IMR-90 (cell line): ENCODE measurements at regions of chr16 and their contacts with region 1.

Region 1: GRCh38 chr16:28943281-28943680 is 7.5 kb upstream of the NFATC2IP start:
- DNase-seq: no peak
- ATAC-seq: no peak
- H3K4me3 ChIP-seq: no peak overlapping the region
- H3K27ac ChIP-seq: no peak overlapping the region
- H3K4me1 ChIP-seq: peaks cover 4% of the 10 kb centered on the region
- H3K27me3 ChIP-seq: no peaks in the 10 kb centered on the region
- CTCF ChIP-seq: no peak
- POLR2A ChIP-seq: no peak
- RAD21 ChIP-seq: no peak

Region 2: GRCh38 chr16:28823872-28824716 is 119.2 kb before region 1 on chr16:
- CTCF ChIA-PET with region 1: interaction called, 3 read pairs
- POLR2A ChIA-PET with region 1: no interaction called
- dilution Hi-C with region 1: no loop called
- in situ Hi-C with region 1: loop called (anchors 5 kb)
- intact Hi-C with region 1: loop called (anchors 5 kb)
- DNase-seq: peak; percentile 98
- ATAC-seq: peak; percentile 90
- H3K4me3 ChIP-seq: peak overlapping the region; percentile 69
- H3K27ac ChIP-seq: peak overlapping the region; percentile 95
- H3K4me1 ChIP-seq: peaks cover 4% of the 10 kb centered on the region; the same call in 1 of the 2 replicates
- H3K27me3 ChIP-seq: no peaks in the 10 kb centered on the region
- CTCF ChIP-seq: peak; percentile 21; the same call in 1 of the 2 replicates
- POLR2A ChIP-seq: peak; percentile 82
- RAD21 ChIP-seq: no peak

Region 3: GRCh38 chr16:28863929-28864793 is 79.1 kb before region 1 on chr16:
- CTCF ChIA-PET with region 1: interaction called, 4 read pairs
- POLR2A ChIA-PET with region 1: no interaction called
- dilution Hi-C with region 1: no loop called
- in situ Hi-C with region 1: no loop called
- intact Hi-C with region 1: loop called (anchors 5 kb)
- DNase-seq: peak; percentile 55
- ATAC-seq: peak; percentile 3
- H3K4me3 ChIP-seq: peak overlapping the region; percentile 93
- H3K27ac ChIP-seq: peak overlapping the region; percentile 95
- H3K4me1 ChIP-seq: peaks cover 5% of the 10 kb centered on the region; the same call in 1 of the 2 replicates
- H3K27me3 ChIP-seq: no peaks in the 10 kb centered on the region
- CTCF ChIP-seq: no peak
- POLR2A ChIP-seq: no peak
- RAD21 ChIP-seq: no peak

Region 4: GRCh38 chr16:28873536-28874201 is 69.6 kb before region 1 on chr16:
- CTCF ChIA-PET with region 1: interaction called, 4 read pairs
- POLR2A ChIA-PET with region 1: no interaction called
- dilution Hi-C with region 1: no loop called
- in situ Hi-C with region 1: no loop called
- intact Hi-C with region 1: loop called (anchors 1 kb)
- DNase-seq: no peak
- ATAC-seq: peak; percentile 64
- H3K4me3 ChIP-seq: no peak overlapping the region
- H3K27ac ChIP-seq: no peak overlapping the region
- H3K4me1 ChIP-seq: no peaks in the 10 kb centered on the region
- H3K27me3 ChIP-seq: no peaks in the 10 kb centered on the region
- CTCF ChIP-seq: peak; percentile 52
- POLR2A ChIP-seq: no peak
- RAD21 ChIP-seq: peak; percentile 28

Region 5: DNA sequence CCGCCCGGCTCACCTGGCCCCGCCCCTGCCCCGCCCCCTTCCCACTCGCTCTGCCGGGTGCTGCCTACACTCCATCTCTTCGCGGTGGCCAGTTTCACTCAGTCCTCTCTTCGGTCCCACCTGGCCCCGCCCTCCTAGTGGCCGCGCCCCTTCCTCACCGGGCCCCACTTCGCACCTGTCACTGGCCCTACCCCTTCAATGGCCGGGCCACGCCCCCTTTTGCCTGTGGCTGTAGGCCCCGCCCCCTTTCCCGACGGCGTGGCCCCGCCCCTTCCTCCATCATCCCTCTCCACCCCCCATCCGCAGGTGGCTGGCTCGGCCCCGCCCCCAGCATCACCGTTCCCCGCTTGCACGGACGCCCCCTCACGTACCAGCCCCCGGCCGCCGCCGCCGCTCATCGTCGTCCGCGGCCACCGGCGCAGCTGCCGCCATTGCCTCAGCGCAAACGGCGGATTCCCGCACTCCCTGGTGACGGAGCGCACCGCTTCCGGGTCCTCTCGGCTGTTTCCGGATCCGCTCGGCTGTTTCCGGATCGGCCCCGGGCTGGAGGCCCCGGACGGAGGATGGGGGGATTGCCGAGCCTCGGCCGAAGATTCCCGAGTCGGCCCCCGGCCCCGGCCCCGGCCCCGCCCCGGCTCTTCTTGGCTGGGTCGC is 18.4 kb before region 1 on chr16 and contains the start of gene RABEP2:
- CTCF ChIA-PET with region 1: interaction called, 5 read pairs
- POLR2A ChIA-PET with region 1: interaction called, 4 read pairs
- dilution Hi-C with region 1: no loop called
- in situ Hi-C with region 1: no loop called
- intact Hi-C with region 1: loop called (anchors 2 kb)
- DNase-seq: peak; percentile 78
- ATAC-seq: peak; percentile 97
- H3K4me3 ChIP-seq: peak within 1 kb of the TSS; percentile 98
- H3K27ac ChIP-seq: peak within 1 kb of the TSS; percentile 96
- H3K4me1 ChIP-seq: peaks cover 2% of the 10 kb centered on the region; the same call in 1 of the 2 replicates
- H3K27me3 ChIP-seq: no peaks in the 10 kb centered on the region
- CTCF ChIP-seq: no peak
- POLR2A ChIP-seq: no peak
- RAD21 ChIP-seq: no peak
- total RNA-seq, gene RABEP2: 12.2 and 14.4 TPM in 2 replicates